SK-N-SH (cell line): ENCODE measurements at regions of chr6 and their contacts with region 1.

Region 1: GRCh38 chr6:41027799-41028628 is 11.0 kb downstream of the UNC5CL start:
- DNase-seq: peak; percentile 95
- H3K4me3 ChIP-seq: peak overlapping the region in 1 of 2 experiments; percentile 39; a peak in 2 of 4 replicates
- H3K27ac ChIP-seq: no peak overlapping the region
- H3K4me1 ChIP-seq: peaks cover 0 to 12% of the 10 kb centered on the region in 2 experiments; a peak in 1 of 4 replicates
- H3K27me3 ChIP-seq: no peaks in the 10 kb centered on the region
- CTCF ChIP-seq: peak; percentile 95
- EP300 ChIP-seq: no peak
- RAD21 ChIP-seq: peak; percentile 91

Region 2: GRCh38 chr6:39980839-39981580 is 1047.0 kb before region 1 on chr6:
- CTCF ChIA-PET with region 1: interaction called, 17 read pairs
- POLR2A ChIA-PET with region 1: no interaction called
- DNase-seq: peak; percentile 59
- H3K4me3 ChIP-seq: no peak overlapping the region; a peak in 1 of 4 replicates
- H3K27ac ChIP-seq: no peak overlapping the region
- H3K4me1 ChIP-seq: no peaks in the 10 kb centered on the region
- H3K27me3 ChIP-seq: no peaks in the 10 kb centered on the region
- CTCF ChIP-seq: peak; percentile 52
- EP300 ChIP-seq: no peak
- RAD21 ChIP-seq: peak; percentile 90

Region 3: DNA sequence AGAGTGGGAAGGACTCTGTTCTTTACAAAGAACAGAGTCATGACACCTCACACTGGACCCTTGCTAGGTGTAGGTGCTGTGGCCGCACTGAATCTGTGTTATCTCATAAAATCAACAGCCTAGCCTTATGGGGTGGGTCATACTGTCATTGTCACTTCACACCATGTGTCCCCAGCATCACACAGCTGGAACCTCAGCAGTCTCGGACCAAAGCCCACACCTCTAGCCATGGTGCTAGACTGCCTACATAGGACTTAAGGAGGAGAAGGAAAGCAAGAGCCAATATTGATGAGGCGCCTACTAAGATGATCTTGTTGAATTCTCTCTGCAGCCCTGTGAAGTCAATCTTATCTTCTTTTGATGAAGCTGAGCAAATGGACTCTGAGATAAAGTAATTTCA is 20.0 kb before region 1 on chr6:
- CTCF ChIA-PET with region 1: interaction called, 21 read pairs
- POLR2A ChIA-PET with region 1: no interaction called
- DNase-seq: no peak
- H3K4me3 ChIP-seq: no peak overlapping the region
- H3K27ac ChIP-seq: no peak overlapping the region
- H3K4me1 ChIP-seq: no peaks in the 10 kb centered on the region
- H3K27me3 ChIP-seq: no peaks in the 10 kb centered on the region; the same call in 1 of the 2 replicates
- CTCF ChIP-seq: no peak
- EP300 ChIP-seq: no peak
- RAD21 ChIP-seq: no peak

Region 4: GRCh38 chr6:41039060-41039998 is 11.3 kb after region 1 on chr6 and contains the start of gene UNC5CL:
- CTCF ChIA-PET with region 1: interaction called, 30 read pairs
- POLR2A ChIA-PET with region 1: interaction called, 5 read pairs
- DNase-seq: peak; percentile 45
- H3K4me3 ChIP-seq: no peak within 1 kb of the TSS
- H3K27ac ChIP-seq: no peak within 1 kb of the TSS
- H3K4me1 ChIP-seq: no peaks in the 10 kb centered on the region; a peak in 1 of 4 replicates
- H3K27me3 ChIP-seq: no peaks in the 10 kb centered on the region
- CTCF ChIP-seq: peak; percentile 63
- EP300 ChIP-seq: no peak
- RAD21 ChIP-seq: 0 out of 2 replicates have a peak, but pooled peaks have one; percentile 15
- polyA plus RNA-seq, gene UNC5CL: 0.10 TPM in 2 replicates

Region 5: DNA sequence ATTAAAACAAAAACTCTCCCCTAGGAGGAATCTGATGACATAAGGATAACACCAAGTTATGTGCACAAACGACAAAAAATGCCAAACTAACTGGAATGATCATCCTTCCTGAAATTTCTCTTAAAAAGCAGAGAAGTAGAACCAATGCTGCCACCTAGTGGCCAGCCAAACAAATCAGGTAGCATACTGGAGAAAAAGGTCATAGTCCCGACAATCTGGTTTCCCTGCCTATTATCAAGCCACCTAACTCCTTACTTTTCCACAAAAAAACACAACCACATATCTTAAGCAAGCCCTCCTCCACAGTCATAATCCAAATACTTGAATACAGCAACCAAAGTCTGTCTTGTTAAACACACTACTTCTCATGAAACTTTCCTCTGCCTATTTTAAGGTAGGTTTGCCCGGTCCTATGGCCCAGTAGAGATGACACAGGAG is 38.9 kb after region 1 on chr6:
- CTCF ChIA-PET with region 1: interaction called, 20 read pairs
- POLR2A ChIA-PET with region 1: no interaction called
- DNase-seq: peak; percentile 36
- H3K4me3 ChIP-seq: no peak overlapping the region
- H3K27ac ChIP-seq: no peak overlapping the region
- H3K4me1 ChIP-seq: peaks cover 0 to 7% of the 10 kb centered on the region in 2 experiments; a peak in 2 of 4 replicates
- H3K27me3 ChIP-seq: no peaks in the 10 kb centered on the region
- CTCF ChIP-seq: peak; percentile 94
- EP300 ChIP-seq: no peak
- RAD21 ChIP-seq: peak; percentile 83